HEK293 (cell line): ENCODE measurements at regions of chr6 and their contacts with region 1.

Region 1: DNA sequence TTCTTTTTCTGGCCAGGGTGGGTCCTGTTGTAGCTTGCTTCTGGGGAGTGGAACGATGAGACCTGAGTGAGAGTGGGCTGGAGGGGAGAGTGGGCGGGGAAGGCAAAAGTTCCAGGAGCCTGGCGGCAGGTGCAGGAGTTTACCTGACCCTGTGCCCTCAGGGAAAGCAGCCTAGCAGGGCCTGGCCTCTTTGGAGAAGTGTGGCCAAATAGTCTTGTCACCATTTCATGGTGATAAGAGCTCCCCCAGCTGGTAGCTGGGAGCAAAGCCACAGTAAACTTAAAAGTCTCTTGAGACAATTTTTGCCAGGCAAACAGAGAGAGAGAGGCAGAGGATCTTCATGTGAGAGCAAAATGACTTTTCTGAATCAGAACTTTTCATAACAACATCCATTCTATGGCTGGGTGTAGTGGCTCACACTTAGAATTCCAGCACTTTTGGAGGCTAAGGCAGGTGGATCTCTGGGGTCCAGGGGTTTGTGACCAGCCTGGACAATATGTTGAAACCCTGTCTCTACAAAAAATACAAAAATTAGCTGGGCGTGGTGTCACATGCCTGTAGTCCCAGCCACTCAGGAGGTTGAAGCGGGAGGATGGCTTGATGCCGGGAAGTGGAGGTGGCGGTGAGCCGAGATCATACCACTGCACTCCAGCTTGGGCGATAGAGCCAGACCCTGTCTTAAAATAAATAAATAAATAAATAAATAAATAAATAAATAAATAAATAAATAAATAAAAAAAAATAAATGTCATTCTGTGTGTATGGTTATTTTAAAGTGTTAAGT is 161.8 kb upstream of the SCGN start:
- H3K4me3 ChIP-seq: no peak overlapping the region
- H3K27ac ChIP-seq: no peak overlapping the region
- H3K4me1 ChIP-seq: peaks cover 19% of the 10 kb centered on the region
- CTCF ChIP-seq: peak; percentile 58

Region 2: DNA sequence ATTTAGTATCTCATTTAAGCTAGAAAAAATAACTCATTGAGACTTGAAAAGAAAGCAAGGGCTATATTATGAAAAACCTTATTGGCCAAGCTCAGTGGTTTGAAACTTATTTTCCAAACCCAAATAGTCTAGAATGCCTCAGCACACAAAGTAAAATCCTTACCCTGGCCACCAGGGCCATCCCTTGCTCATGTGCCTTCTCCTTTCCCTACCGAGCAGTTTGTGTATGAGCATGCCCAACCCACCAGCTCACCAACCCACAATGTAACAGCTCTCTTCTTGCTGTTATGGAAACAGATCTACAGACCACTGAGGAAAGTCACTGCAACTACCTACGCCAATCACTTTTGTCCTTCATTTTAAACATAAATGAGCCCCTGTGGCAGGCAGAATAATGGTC is 290.7 kb before region 1 on chr6:
- CTCF ChIA-PET with region 1: no interaction called
- POLR2A ChIA-PET with region 1: no interaction called
- H3K4me3 ChIP-seq: no peak overlapping the region
- H3K27ac ChIP-seq: no peak overlapping the region
- H3K4me1 ChIP-seq: peaks cover 11% of the 10 kb centered on the region
- CTCF ChIP-seq: no peak

Region 3: DNA sequence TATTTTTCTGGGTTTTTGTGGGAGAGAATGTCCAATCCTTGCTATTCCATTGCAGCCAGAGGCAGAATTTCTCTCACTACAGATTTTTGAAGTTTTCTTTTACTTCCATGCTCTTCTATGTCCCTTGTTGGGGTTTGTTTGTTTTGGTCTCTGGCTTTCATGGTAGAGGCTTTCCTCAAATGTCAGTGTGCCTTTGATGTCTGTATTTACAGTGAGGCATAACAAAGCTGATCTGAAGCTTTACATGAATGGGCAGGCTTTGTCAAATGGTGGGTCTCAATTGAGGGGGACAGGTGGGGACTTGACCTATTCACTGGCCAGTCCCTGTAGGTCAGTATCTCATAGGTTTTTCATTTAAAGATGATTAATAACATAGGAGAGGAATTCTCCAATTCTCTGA is 219.7 kb before region 1 on chr6:
- CTCF ChIA-PET with region 1: interaction called, 124 read pairs
- POLR2A ChIA-PET with region 1: interaction called, 6 read pairs
- H3K4me3 ChIP-seq: no peak overlapping the region
- H3K27ac ChIP-seq: no peak overlapping the region
- H3K4me1 ChIP-seq: no peaks in the 10 kb centered on the region; the same call in 1 of the 2 replicates
- CTCF ChIP-seq: no peak

Region 4: DNA sequence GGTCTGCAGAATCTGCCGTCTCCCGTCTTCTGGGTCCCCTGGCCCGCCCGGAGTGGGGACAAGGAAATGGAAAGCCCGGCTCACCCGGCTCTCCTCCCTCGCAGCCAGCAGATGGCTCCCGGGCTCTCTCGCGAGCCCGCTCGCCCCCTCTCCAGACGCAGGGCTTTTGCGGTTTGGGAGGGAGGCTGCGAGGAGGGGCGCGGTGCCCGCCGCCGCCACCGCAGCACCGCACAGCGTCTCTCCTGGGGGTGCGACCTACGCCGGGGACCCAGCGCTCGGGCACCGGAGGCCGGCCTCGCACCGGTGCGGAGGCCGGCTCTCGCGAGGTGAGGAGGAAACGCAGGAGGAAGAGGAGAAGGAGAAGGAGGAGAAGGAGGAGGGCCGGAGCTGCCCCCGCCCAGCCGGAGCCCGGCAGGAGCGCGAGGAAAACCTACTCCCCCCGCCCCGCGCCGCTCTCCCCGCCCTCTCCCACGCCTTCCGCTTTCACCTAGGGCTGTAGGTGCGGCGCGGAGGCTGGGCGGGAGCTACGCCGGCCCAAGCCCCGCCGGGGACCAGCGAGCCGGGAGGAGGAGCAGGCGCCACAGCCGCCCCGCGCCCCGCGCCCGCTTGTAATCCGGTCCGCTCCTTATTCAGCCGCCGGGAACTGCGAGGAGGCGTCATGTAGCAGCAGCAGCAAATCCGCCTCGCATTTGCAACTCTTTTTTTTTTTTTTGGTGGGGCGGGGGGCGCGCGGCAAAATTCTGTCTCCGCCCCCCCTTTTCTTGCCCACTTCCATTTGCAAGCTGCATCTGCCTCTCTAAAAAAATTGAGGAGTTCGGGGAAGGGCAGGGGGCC is 211.1 kb before region 1 on chr6 and contains the start of gene CARMIL1:
- CTCF ChIA-PET with region 1: interaction called, 95 read pairs
- POLR2A ChIA-PET with region 1: interaction called, 24 read pairs
- H3K4me3 ChIP-seq: peak within 1 kb of the TSS; percentile 83
- H3K27ac ChIP-seq: peak within 1 kb of the TSS; percentile 89
- H3K4me1 ChIP-seq: peaks cover 15% of the 10 kb centered on the region
- CTCF ChIP-seq: peak; percentile 86

Region 5: DNA sequence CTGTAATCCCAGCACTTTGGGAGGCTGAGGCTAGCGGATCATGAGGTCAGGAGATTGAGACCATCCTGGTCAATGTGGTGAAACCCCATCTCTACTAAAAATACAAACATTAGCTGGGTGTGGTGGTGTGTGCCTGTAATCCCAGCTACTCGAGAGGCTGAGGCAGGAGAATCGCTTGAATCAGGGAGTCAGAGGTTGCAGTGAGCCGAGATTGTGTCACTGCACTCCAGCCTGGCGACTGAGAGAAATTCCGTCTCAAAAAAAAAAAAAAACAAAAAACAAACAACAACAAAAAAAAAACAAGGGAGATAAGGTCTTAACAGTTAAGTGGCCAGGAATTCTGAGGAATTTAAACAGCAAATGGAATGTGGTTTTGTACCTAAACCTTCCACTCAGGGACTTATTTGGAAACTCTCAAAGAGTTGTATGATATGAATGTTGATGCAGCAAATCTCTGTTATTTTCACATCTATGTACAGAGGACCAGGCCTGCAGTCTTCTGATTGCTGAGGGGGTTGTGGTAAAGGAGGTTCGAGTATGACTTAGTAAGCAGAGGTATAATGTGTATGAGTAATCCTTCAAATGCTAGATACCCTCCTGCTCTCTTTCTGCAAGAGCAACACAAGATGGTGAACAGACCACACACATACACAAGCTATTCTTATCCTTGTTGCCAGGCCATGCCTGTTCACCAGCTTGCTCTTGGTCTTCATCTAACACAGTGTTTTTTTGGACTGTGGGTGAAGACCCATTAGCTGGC is 13.2 kb before region 1 on chr6:
- CTCF ChIA-PET with region 1: interaction called, 10 read pairs
- POLR2A ChIA-PET with region 1: no interaction called
- H3K4me3 ChIP-seq: no peak overlapping the region
- H3K27ac ChIP-seq: no peak overlapping the region
- H3K4me1 ChIP-seq: no peaks in the 10 kb centered on the region
- CTCF ChIP-seq: no peak

Region 6: GRCh38 chr6:25508051-25508450 is 17.8 kb after region 1 on chr6:
- CTCF ChIA-PET with region 1: interaction called, 16 read pairs
- POLR2A ChIA-PET with region 1: interaction called, 3 read pairs
- H3K4me3 ChIP-seq: no peak overlapping the region
- H3K27ac ChIP-seq: no peak overlapping the region
- H3K4me1 ChIP-seq: no peaks in the 10 kb centered on the region
- CTCF ChIP-seq: no peak

Region 7: DNA sequence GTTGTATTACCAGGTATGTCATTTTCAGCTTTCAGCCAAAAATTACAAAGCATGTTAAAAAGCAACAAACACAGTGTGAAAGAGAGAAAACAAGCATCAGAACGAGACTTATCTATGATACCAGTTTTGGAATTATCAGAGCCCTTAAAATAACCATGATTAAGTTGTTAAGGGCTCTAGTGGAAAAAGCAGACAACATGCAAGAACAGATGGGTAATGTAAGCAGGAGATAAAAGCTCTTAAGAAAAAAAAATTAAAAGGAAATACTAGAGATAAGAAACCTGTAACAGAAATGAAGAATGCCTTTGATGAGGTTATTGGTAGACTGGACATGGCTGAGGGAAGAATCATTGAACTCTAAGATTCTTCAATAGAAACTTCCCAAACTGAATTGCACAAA is 34.3 kb after region 1 on chr6:
- CTCF ChIA-PET with region 1: no interaction called
- POLR2A ChIA-PET with region 1: no interaction called
- H3K4me3 ChIP-seq: no peak overlapping the region
- H3K27ac ChIP-seq: no peak overlapping the region
- H3K4me1 ChIP-seq: no peaks in the 10 kb centered on the region
- CTCF ChIP-seq: no peak

Region 8: DNA sequence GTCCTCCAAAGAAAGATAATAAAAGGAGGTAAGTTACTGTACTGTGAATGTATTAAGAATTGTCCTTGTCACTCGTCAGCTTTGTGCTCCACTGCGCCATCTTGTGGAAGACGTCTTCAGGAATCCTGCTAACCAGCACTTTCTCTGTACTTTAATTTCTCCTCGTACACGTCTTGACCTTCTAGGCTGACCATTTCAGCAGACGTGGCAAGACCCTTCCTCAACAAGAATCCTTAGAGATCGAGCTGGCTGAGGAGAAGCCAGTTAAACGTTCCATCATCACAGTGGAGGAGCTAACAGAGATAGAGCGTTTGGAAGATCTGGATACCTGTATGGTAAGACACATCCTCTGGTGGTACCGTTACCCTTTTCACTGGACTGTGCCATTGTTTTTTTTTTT is 66.3 kb after region 1 on chr6:
- CTCF ChIA-PET with region 1: interaction called, 31 read pairs
- POLR2A ChIA-PET with region 1: no interaction called
- H3K4me3 ChIP-seq: no peak overlapping the region
- H3K27ac ChIP-seq: no peak overlapping the region
- H3K4me1 ChIP-seq: no peaks in the 10 kb centered on the region
- CTCF ChIP-seq: peak; percentile 50; the same call in 1 of the 2 replicates

Region 9: DNA sequence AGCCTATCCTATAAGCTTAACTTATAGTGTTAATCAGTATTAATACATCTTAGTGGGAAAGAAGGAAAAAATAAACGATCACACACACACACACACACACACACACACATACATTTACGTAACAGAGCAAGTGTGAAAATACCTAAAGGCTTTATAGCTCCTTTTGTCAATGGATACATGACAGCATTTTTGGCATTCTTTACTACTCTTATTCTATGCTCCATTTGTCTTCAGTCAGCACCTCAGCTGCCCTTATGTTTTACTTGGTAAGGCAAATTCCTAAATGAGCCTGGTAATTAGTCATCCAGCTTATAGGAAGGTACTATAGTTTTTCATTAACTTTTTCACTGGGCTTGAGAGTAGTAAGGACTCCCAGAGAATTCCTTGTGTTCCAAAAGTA is 408.9 kb after region 1 on chr6:
- CTCF ChIA-PET with region 1: no interaction called
- POLR2A ChIA-PET with region 1: no interaction called
- H3K4me3 ChIP-seq: no peak overlapping the region
- H3K27ac ChIP-seq: no peak overlapping the region
- H3K4me1 ChIP-seq: no peaks in the 10 kb centered on the region
- CTCF ChIP-seq: no peak